ENCODE measurements at regions of chr4 and their contacts with region 1.

Region 1: GRCh38 chr4:176319704-176320339 is at the start of gene SPCS3:
- DNase-seq: peak; percentile 95
- H3K4me3 Mint-ChIP-seq: peak within 1 kb of the TSS; percentile 85
- H3K27ac Mint-ChIP-seq: peak within 1 kb of the TSS; percentile 89
- H3K4me1 Mint-ChIP-seq: peaks cover 35% of the 10 kb centered on the region
- H3K27me3 Mint-ChIP-seq: no peaks in the 10 kb centered on the region
- total RNA-seq, gene SPCS3: 182 to 185 TPM

Region 2: GRCh38 chr4:176065435-176066291 is 254.2 kb before region 1 on chr4 and contains the start of gene WDR17:
- CTCF ChIA-PET with region 1: no interaction called
- POLR2A ChIA-PET with region 1: no interaction called
- intact Hi-C with region 1: loop called (anchors 1 kb)
- DNase-seq: peak; percentile 83
- H3K4me3 Mint-ChIP-seq: peak within 1 kb of the TSS; percentile 75
- H3K27ac Mint-ChIP-seq: no peak within 1 kb of the TSS
- H3K4me1 Mint-ChIP-seq: peaks cover 12% of the 10 kb centered on the region
- H3K27me3 Mint-ChIP-seq: peaks cover 17% of the 10 kb centered on the region
- total RNA-seq, gene WDR17: 1.1 to 1.2 TPM

Region 3: GRCh38 chr4:176286728-176287127 is 33.1 kb before region 1 on chr4:
- CTCF ChIA-PET with region 1: no interaction called
- POLR2A ChIA-PET with region 1: no interaction called
- intact Hi-C with region 1: no loop called
- DNase-seq: no peak
- H3K4me3 Mint-ChIP-seq: no peak overlapping the region
- H3K27ac Mint-ChIP-seq: no peak overlapping the region
- H3K4me1 Mint-ChIP-seq: no peaks in the 10 kb centered on the region
- H3K27me3 Mint-ChIP-seq: peaks cover 3% of the 10 kb centered on the region

Region 4: GRCh38 chr4:176309046-176309445 is 10.8 kb before region 1 on chr4:
- CTCF ChIA-PET with region 1: no interaction called
- POLR2A ChIA-PET with region 1: no interaction called
- intact Hi-C with region 1: loop called (anchors 1 kb)
- DNase-seq: peak; percentile 19
- H3K4me3 Mint-ChIP-seq: no peak overlapping the region
- H3K27ac Mint-ChIP-seq: no peak overlapping the region
- H3K4me1 Mint-ChIP-seq: no peaks in the 10 kb centered on the region
- H3K27me3 Mint-ChIP-seq: peaks cover 30% of the 10 kb centered on the region

Region 5: GRCh38 chr4:176333076-176333475 is 13.3 kb after region 1 on chr4:
- CTCF ChIA-PET with region 1: interaction called, 3 read pairs
- POLR2A ChIA-PET with region 1: no interaction called
- intact Hi-C with region 1: loop called (anchors 1 kb)
- DNase-seq: no peak
- H3K4me3 Mint-ChIP-seq: no peak overlapping the region
- H3K27ac Mint-ChIP-seq: no peak overlapping the region
- H3K4me1 Mint-ChIP-seq: peaks cover 18% of the 10 kb centered on the region
- H3K27me3 Mint-ChIP-seq: no peaks in the 10 kb centered on the region

Region 6: GRCh38 chr4:177309522-177310371 is 989.9 kb after region 1 on chr4 and contains the start of gene NEIL3:
- CTCF ChIA-PET with region 1: no interaction called
- POLR2A ChIA-PET with region 1: no interaction called
- intact Hi-C with region 1: loop called (anchors 2 kb)
- DNase-seq: peak; percentile 97
- H3K4me3 Mint-ChIP-seq: peak within 1 kb of the TSS; percentile 92
- H3K27ac Mint-ChIP-seq: peak within 1 kb of the TSS; percentile 79
- H3K4me1 Mint-ChIP-seq: peaks cover 25% of the 10 kb centered on the region
- H3K27me3 Mint-ChIP-seq: no peaks in the 10 kb centered on the region
- total RNA-seq, gene NEIL3: 18.2 to 18.3 TPM

Region 7: GRCh38 chr4:177441803-177442622 is 1122.2 kb after region 1 on chr4 and contains the start of gene AGA:
- CTCF ChIA-PET with region 1: no interaction called
- POLR2A ChIA-PET with region 1: interaction called, 3 read pairs
- intact Hi-C with region 1: loop called (anchors 2 kb)
- DNase-seq: peak; percentile 97
- H3K4me3 Mint-ChIP-seq: peak within 1 kb of the TSS; percentile 90
- H3K27ac Mint-ChIP-seq: peak within 1 kb of the TSS; percentile 97
- H3K4me1 Mint-ChIP-seq: peaks cover 24% of the 10 kb centered on the region
- H3K27me3 Mint-ChIP-seq: no peaks in the 10 kb centered on the region
- total RNA-seq, gene AGA: 22.1 to 22.5 TPM